Activated naive CD8-positive, alpha-beta T cell treated with anti-CD3 and anti-CD28 coated beads, Interleukin-2, amount 10 ng/mL, durations not matched to agents 7 days and 5 days (primary cell): ENCODE measurements at regions of chr2 and their contacts with region 1.

Region 1: DNA sequence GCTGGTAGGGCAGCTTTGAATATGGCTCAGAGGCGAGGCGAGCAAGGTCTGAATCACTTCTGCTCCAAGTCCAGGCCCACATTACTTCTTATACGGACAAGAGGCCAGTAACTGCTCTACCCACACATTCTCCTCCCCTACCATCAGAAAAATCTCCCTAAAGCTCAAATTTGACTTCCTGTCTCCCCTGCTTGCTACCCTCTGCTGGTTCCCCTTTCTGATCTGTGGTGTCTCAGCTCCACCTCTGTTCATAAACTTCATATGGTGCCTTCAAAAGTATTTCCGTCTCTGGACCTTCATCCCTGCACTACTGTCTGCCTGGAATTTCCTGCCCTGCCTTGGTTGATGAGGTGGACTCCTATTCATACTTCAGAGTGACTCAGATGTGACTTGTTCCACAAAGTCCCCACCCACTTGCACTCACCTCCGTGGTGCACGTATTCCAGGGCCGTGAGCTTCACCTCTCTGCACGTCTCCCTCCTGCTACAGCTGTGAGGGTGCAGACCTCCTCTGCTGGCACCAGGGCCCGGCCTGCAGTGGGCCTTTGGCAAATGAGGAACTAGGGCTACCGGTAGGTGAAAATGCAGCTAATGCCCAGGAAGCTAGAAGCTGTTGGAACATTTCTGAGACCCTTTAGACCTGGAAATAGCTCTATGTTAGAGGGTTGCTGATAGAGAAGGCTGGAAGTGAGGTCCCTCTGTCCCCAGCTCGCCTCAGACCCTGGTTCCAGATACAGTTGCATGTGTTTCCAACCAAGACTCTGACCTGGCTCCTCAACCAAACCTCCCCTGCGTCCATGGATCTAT is 24.6 kb upstream of the KCMF1 start:
- DNase-seq: peak; percentile 66
- ATAC-seq: peak; percentile 90
- H3K4me3 Mint-ChIP-seq: peak overlapping the region; percentile 80
- H3K27ac Mint-ChIP-seq: peak overlapping the region; percentile 97
- H3K4me1 Mint-ChIP-seq: peaks cover 26% of the 10 kb centered on the region
- H3K27me3 Mint-ChIP-seq: no peaks in the 10 kb centered on the region

Region 2: DNA sequence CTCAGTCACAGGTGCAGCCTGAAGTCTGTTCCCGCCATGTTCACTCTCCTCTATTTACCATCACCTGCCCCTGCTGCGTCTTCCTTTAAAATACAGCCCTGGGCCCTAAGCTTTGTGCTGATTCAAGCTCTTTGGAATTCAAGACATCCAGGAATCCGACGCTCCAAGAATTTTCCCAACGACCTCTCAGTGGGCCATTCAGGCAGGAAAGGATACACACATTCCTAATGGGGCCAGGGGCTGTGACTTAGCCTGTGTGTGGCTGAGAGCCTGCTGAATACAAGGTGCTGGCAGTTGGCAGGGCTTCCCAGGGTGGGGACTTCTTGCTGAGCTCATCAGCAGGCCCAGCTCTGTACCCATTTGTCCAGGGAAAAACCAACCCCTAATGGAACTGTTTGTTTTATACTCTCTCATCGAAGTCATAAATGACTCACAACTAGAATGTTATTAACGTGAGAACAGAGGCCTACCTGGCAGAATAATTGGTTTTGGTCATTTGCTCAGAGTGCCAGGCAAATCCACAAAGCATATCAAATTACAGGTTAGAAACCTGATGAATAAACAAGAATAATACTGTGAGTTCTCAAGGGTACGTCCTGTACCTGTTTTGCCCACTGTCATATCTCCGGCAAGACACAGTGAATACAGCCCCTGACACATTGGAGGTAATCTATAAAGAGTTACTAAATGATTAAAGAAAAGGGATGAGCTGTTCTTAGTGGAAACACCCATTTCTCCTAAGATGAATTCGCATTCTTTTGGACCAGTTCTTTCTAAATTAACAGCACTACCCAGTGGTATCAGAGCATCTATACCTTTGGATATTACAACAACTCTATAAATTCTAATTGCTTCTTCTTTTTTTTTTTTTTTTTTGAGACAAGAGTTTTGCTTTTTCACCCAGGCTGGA is 12.0 kb after region 1 on chr2:
- POLR2A ChIA-PET with region 1: interaction called, 49 read pairs
- DNase-seq: peak; percentile 10
- ATAC-seq: no peak
- H3K4me3 Mint-ChIP-seq: no peak overlapping the region
- H3K27ac Mint-ChIP-seq: no peak overlapping the region
- H3K4me1 Mint-ChIP-seq: peaks cover 16% of the 10 kb centered on the region
- H3K27me3 Mint-ChIP-seq: no peaks in the 10 kb centered on the region

Region 3: DNA sequence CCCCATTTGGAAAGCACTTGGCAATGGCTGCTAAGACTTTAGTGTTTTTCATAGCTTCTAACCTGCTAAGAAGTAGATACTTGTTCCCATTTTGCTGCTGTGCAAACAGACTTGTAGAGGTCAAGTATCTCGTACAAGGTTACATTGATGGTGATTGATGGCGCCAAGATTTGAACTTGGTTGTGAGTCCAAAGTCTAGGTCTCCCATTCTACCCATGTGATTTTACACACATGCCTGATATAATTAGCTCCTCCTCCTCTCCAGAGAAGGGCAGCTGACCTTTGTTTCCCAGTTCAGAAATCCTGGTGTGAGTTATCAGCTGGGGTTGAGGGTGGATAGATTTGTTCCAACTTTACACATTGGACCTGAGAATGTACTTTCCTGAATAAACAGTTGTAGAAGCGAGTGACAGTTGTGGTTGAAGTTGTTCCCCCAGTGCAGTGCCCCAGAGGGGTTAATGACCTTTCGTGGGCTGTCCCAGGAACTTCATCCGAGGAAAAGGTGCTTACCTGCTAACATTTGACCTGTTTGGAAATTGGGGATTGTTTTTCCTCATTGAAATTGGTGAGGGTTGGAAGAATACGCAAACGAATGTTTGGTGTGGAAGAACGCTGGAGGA is 197.2 kb after region 1 on chr2:
- POLR2A ChIA-PET with region 1: no interaction called
- DNase-seq: no peak
- ATAC-seq: no peak
- H3K4me3 Mint-ChIP-seq: no peak overlapping the region
- H3K27ac Mint-ChIP-seq: no peak overlapping the region
- H3K4me1 Mint-ChIP-seq: no peaks in the 10 kb centered on the region
- H3K27me3 Mint-ChIP-seq: peaks cover 46% of the 10 kb centered on the region